MCF 10A (cell line): ENCODE measurements at regions of chr3 and their contacts with region 1.

Region 1: GRCh38 chr3:107740992-107741896 is 218.5 kb downstream of the BBX start:
- DNase-seq: peak; percentile 32
- H3K4me3 Mint-ChIP-seq: no peak overlapping the region
- H3K27ac Mint-ChIP-seq: no peak overlapping the region
- H3K4me1 Mint-ChIP-seq: no peaks in the 10 kb centered on the region
- H3K27me3 Mint-ChIP-seq: no peaks in the 10 kb centered on the region
- CTCF ChIP-seq: peak; percentile 38

Region 2: DNA sequence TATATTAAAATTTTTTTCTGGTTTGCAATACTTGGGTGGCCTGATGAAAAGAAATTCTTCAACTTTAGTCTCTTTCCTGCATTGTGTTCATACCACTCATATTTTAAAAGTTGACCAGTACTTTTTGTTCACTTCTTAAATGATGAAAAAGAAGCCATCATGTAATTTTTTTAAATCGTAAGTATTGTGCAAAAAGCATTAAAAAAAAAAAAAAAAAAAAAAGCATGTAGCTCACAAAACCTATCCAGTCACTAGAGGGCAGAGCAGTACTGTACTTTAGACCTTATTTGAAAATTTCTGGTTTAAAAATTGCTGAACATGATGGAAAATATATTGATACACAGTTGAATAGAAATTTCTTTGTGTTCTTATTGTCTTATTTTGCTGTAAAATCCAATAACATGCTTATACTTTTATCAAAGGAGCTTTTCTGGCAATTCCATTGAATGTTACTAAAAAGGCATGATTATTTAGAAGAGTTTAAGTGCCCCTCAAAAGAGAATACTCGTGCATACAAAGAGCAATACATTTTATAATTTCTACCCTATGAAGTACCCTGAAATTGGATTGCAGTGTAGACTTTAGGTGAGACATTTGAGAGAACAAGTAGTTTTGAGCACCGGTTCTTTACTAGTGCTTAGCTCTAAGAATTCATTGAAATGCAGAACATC is 80.8 kb before region 1 on chr3:
- CTCF ChIA-PET with region 1: interaction called, 28 read pairs
- POLR2A ChIA-PET with region 1: interaction called, 5 read pairs
- intact Hi-C with region 1: loop called (anchors 1 kb)
- DNase-seq: peak; percentile 54
- H3K4me3 Mint-ChIP-seq: no peak overlapping the region
- H3K27ac Mint-ChIP-seq: no peak overlapping the region
- H3K4me1 Mint-ChIP-seq: peaks cover 29% of the 10 kb centered on the region
- H3K27me3 Mint-ChIP-seq: no peaks in the 10 kb centered on the region
- CTCF ChIP-seq: peak; percentile 53

Region 3: GRCh38 chr3:107690522-107691138 is 50.6 kb before region 1 on chr3:
- CTCF ChIA-PET with region 1: interaction called, 44 read pairs
- POLR2A ChIA-PET with region 1: interaction called, 4 read pairs
- intact Hi-C with region 1: loop called (anchors 1 kb)
- DNase-seq: peak; percentile 65
- H3K4me3 Mint-ChIP-seq: no peak overlapping the region
- H3K27ac Mint-ChIP-seq: peak overlapping the region; percentile 63
- H3K4me1 Mint-ChIP-seq: peaks cover 8% of the 10 kb centered on the region
- H3K27me3 Mint-ChIP-seq: no peaks in the 10 kb centered on the region
- CTCF ChIP-seq: peak; percentile 43

Region 4: DNA sequence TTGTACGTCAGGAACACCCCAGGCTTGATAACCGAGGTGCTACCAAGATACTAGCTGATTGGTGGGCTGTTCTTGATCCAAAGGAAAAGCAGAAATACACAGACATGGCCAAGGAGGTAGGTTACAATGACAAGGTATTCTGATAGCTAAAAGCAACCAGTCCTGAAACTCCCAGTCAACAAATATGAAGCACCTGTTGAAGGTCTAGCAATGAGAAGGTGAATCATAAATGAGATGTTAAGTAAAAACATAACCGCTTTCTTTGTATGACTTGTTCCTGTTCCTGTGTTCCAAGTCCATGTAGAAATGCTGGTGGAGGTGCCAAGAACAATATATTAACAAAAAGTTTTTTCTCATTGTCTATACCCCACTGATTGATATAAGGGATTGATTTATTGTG is 24.5 kb before region 1 on chr3:
- CTCF ChIA-PET with region 1: interaction called, 11 read pairs
- POLR2A ChIA-PET with region 1: no interaction called
- intact Hi-C with region 1: no loop called
- DNase-seq: peak; percentile 4
- H3K4me3 Mint-ChIP-seq: no peak overlapping the region
- H3K27ac Mint-ChIP-seq: no peak overlapping the region
- H3K4me1 Mint-ChIP-seq: peaks cover 5% of the 10 kb centered on the region
- H3K27me3 Mint-ChIP-seq: no peaks in the 10 kb centered on the region
- CTCF ChIP-seq: no peak

Region 5: DNA sequence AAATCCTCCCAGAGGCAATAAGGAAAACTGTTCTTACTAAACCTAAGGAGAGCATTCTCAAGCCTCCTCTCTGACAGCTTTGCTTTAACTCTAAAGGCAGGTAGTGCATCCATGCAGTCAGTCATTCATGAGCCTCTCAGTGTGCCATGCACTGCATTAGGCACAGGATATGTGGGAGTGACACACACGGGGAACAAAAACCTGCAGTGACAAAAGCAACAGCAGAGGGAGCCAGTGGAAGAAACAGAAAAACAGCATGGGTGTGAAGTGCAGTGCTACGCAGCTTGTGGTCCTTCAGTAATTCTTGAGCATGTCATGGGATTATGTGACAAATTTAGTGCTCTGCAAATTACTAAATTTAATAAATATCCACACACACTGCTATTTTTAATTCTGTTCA is 12.2 kb after region 1 on chr3:
- CTCF ChIA-PET with region 1: interaction called, 14 read pairs
- POLR2A ChIA-PET with region 1: interaction called, 4 read pairs
- intact Hi-C with region 1: no loop called
- DNase-seq: peak; percentile 63
- H3K4me3 Mint-ChIP-seq: no peak overlapping the region
- H3K27ac Mint-ChIP-seq: no peak overlapping the region
- H3K4me1 Mint-ChIP-seq: peaks cover 6% of the 10 kb centered on the region
- H3K27me3 Mint-ChIP-seq: no peaks in the 10 kb centered on the region
- CTCF ChIP-seq: peak; percentile 40